Posterior vena cava (tissue), 2 donors: ENCODE measurements at regions of chr11 and their contacts with region 1.

Region 1: GRCh38 chr11:123628936-123629683 is 25.3 kb downstream of the SCN3B start:
- DNase-seq: peak; percentile 90

Region 2: GRCh38 chr11:123221096-123221561 is 408.0 kb before region 1 on chr11:
- intact Hi-C with region 1: no loop called
- DNase-seq: no peak

Region 3: DNA sequence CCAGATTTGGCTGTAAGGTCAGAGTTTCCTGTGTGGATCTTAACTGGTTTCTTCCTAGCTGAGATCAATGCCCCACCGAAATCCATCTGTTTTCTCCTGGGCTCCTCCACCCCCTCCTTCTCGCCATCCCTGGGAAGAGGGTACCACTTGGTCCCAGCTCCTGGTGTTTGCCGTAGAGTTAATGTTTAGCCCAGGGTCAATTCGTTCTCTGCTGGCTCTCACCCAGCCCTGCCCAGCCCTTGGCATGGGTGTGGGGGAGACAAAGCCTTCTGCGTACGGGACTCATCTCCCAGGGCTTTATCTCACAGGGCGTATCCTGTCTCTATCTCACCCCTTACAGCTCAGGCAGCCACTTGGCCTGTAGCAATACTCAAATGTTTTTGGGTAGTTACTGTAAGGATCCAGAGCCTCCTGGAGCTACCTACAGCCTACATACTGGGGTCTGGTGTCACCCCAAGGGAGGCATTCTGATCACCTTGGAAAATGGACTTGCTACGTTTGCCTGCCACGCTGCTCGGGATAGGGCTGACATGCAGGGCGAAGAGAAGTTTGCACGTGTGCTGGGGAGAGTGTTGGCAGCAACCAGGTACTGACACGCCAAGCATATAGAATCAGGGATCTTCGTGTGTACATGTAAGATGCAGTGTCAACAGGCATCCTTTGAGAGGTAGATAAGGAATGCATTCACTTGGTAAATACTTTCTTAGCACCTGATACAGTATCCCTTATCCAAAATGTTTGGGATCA is 40.8 kb before region 1 on chr11:
- intact Hi-C with region 1: loop called in 1 of 2 experiments (anchors 2 kb)
- DNase-seq: no peak

Region 4: DNA sequence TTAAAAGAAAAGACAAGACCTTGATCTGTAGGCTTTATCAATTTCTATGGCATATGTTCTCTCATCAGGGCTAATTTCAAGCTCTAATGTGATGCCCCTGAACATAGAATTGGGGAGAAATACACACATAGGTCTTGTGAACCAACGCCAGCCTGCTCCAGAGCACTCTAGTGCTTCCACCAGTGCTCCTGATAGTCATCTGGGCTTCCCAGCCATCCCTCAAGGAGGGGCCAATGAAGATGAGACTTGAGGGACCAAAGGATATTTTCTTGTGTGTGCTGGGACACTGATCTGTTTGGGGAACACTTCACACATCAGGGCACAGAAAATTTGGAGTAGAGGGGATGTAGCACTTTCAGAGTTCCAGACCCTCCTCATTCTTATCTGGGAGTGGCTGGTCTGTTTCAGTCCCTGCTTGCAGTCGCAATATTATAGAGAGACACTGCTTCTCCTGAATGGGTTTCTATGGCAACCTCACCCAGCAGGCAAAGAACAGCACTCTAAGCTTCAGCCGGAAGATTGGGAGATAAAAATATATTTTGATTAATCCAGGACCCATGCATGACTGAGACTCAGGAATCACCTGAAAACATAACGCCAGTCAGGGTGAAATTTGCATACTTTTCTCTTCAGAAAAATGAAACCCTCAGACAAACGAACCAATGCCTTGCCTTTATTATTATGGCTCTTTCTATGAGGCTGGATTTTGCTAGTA is 53.7 kb after region 1 on chr11:
- intact Hi-C with region 1: no loop called
- DNase-seq: no peak